ENCODE measurements at regions of chr2 and their contacts with region 1.

Region 1: DNA sequence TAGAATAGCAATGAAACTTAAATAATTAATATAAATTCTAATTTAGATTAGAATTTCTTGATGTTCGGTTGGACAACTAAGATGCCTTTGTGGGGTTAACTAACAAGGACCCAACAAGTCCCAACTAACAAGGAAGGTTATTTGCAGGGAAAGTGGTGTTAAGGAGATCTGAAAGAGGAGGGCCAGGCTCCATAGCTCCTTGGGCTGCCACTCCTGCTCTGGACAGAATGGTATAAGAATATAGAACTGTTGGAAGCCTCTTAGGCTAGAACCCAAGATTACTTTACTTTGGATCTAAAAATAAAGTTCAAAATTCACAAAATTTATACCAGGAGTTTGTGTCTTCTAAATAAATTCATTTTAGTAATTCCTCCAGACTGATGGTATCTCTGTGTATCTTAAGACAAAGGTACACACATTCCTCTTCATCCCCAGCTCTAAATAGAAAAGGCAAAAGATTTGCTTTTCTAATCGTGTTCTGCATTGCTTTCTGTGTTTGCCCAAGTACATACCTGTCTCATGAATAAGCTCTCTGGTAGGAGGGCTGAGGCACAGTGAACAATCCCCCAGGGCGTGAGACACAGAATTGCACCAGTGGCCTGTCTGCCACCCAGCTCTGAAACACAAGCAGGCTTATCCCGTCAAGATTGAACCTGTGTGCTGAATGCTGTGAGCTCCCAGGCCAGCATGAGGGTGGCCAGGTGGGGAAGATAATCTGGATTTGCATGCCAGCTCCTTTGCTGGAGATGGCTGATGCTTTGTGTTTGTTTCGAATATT is 176.0 kb downstream of the ACKR3 start:
- DNase-seq: peak; percentile 94
- H3K4me3 ChIP-seq: no peak overlapping the region
- H3K27ac ChIP-seq: peak overlapping the region; percentile 86
- H3K4me1 ChIP-seq: peaks cover 68% of the 10 kb centered on the region
- H3K27me3 ChIP-seq: no peaks in the 10 kb centered on the region
- CTCF ChIP-seq: peak in 1 of 2 donors; percentile 22

Region 2: GRCh38 chr2:236607451-236608187 is 138.0 kb before region 1 on chr2:
- CTCF ChIA-PET with region 1: no interaction called
- dilution Hi-C with region 1: no loop called
- in situ Hi-C with region 1: no loop called
- intact Hi-C with region 1: no loop called
- DNase-seq: peak; percentile 61
- H3K4me3 ChIP-seq: no peak overlapping the region
- H3K27ac ChIP-seq: no peak overlapping the region
- H3K4me1 ChIP-seq: no peaks in the 10 kb centered on the region
- H3K27me3 ChIP-seq: no peaks in the 10 kb centered on the region
- CTCF ChIP-seq: peak in 1 of 2 donors; percentile 15

Region 3: DNA sequence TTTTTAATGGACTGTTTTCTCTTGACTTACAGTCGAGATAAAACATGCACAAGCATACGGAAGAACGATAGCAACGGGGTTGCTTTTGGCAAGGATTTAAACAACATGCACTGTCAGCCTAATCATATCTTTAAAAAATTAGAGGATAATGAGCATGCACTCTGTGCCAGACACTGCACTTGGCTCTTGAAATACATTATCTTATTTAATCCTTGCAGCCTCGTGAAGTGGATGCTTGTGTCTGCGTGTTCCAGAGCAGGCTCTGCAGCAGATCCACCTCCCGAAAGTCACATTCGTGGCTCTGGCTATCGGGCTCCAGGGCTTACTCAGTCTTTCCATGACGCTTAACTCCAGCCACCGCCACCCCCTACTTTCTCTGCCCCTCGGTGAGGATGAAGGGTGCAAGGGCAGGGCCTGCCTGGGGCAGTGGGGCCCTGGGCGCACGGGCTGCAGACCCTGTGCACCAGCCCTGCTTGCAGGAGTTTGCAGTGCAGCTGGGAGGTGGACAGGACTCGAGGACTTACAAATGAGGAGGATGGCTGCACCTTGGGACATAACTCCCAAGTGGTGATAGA is 114.2 kb before region 1 on chr2:
- CTCF ChIA-PET with region 1: no interaction called
- dilution Hi-C with region 1: no loop called
- in situ Hi-C with region 1: no loop called
- intact Hi-C with region 1: no loop called
- DNase-seq: no peak
- H3K4me3 ChIP-seq: no peak overlapping the region
- H3K27ac ChIP-seq: no peak overlapping the region
- H3K4me1 ChIP-seq: no peaks in the 10 kb centered on the region
- H3K27me3 ChIP-seq: no peaks in the 10 kb centered on the region
- CTCF ChIP-seq: no peak

Region 4: DNA sequence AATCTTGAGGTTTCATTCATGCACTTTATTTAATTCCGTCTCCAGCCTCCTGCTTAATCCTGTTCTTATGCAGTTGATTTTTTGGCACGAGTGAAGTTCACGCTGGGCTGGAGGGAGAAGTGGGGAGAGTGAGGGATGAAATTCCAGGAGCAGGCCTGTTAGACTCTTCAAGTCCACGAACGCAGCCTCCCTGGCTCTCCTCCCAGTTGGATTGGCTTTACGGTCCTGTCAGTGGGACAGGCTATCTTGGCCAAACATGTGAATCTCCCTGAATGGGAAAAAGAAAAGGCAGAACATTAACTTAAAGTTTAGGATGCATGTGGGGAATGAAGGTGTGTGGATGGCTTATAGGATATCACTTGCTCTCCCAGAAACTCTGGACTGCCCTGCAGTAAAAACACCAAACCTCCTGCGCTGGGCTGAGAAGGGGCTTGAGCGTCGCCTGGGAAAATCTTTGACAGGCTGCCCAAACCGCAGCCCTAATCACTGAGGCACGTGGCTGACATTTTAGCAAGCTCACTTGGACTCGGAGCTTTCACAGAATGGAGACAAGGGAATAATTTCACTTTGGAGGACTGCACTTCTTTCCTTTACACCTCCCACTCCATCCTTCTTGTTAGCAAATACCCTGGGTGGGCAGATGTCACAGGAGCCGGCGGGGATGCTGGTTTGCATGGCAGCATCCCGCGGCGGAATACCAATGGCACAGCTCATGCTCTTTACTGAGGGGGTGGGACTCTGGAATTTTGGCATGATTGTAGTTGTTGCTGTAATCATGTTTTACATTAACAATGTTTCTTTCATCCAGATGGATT is 82.1 kb before region 1 on chr2:
- CTCF ChIA-PET with region 1: no interaction called
- dilution Hi-C with region 1: no loop called
- in situ Hi-C with region 1: no loop called
- intact Hi-C with region 1: loop called (anchors 5 kb)
- DNase-seq: peak; percentile 76
- H3K4me3 ChIP-seq: no peak overlapping the region
- H3K27ac ChIP-seq: peak overlapping the region; percentile 66
- H3K4me1 ChIP-seq: peaks cover 45% of the 10 kb centered on the region
- H3K27me3 ChIP-seq: no peaks in the 10 kb centered on the region
- CTCF ChIP-seq: no peak

Region 5: GRCh38 chr2:236679884-236680860 is 65.4 kb before region 1 on chr2:
- CTCF ChIA-PET with region 1: no interaction called
- dilution Hi-C with region 1: loop called (anchors 5 kb)
- in situ Hi-C with region 1: no loop called
- intact Hi-C with region 1: no loop called
- DNase-seq: peak; percentile 90
- H3K4me3 ChIP-seq: no peak overlapping the region
- H3K27ac ChIP-seq: peak overlapping the region; percentile 90
- H3K4me1 ChIP-seq: peaks cover 43% of the 10 kb centered on the region
- H3K27me3 ChIP-seq: no peaks in the 10 kb centered on the region
- CTCF ChIP-seq: no peak

Region 6: GRCh38 chr2:236731878-236732580 is 13.6 kb before region 1 on chr2:
- CTCF ChIA-PET with region 1: no interaction called
- dilution Hi-C with region 1: no loop called
- in situ Hi-C with region 1: no loop called
- intact Hi-C with region 1: loop called (anchors 1 kb)
- DNase-seq: peak; percentile 48
- H3K4me3 ChIP-seq: no peak overlapping the region
- H3K27ac ChIP-seq: no peak overlapping the region
- H3K4me1 ChIP-seq: peaks cover 10% of the 10 kb centered on the region
- H3K27me3 ChIP-seq: no peaks in the 10 kb centered on the region
- CTCF ChIP-seq: no peak

Region 7: GRCh38 chr2:236795169-236795860 is 49.7 kb after region 1 on chr2:
- CTCF ChIA-PET with region 1: no interaction called
- dilution Hi-C with region 1: loop called (anchors 5 kb)
- in situ Hi-C with region 1: no loop called
- intact Hi-C with region 1: no loop called
- DNase-seq: no peak
- H3K4me3 ChIP-seq: no peak overlapping the region
- H3K27ac ChIP-seq: no peak overlapping the region
- H3K4me1 ChIP-seq: no peaks in the 10 kb centered on the region
- H3K27me3 ChIP-seq: no peaks in the 10 kb centered on the region
- CTCF ChIP-seq: no peak

Measured in mammary epithelial cell (primary cell).